ENCODE measurements at regions of chr5 and their contacts with region 1.

Region 1: DNA sequence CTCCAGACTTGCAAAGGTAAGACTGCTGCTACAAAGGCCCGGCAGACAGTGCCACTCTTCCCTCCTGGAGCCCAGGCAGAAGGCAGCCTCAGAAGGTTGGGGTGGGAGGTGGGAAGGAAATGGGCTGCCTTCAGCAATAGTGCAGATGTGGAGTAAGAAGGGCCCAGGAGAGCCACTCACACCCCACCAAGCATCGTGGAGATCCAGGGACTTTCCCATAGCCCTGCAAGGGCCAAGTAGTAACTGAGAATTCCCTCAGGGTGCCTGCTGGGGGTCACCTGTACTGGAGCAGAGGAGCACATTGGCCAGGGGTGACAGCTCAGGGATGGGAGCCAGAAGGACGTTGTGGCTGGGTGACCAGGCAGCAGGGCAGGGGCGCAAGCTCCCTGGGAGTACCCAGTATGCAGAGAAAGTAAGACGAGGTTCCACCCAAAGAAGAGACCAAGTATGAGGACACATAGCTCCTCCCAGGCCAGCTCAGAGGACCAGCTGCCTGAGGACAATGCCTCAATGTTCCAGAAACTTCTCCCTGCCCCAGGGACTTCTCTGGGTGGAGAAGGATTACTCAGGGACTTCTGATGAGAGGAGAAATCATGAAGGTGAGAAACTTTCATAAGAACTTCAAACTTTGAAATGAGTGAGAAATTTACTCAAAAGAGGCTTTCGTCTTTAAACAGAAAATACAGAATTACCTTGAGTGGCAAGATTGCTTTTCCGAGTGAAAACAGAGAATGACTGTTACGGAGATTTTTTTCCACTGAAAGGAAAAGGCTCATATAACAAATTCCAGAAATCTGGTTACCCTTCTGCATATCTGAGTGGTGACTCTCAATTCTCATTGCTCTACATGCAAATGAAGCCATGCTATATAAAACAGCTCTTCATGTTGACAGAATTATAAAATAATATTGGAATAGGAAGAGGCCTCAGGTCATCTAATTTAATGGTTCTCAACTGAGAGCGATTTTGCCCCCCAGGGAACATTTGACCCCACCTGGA is 87.9 kb upstream of the TRIO start:
- DNase-seq: no peak
- H3K4me3 ChIP-seq: peak overlapping the region; percentile 31
- H3K27ac ChIP-seq: peak overlapping the region; percentile 99
- H3K27me3 ChIP-seq: no peaks in the 10 kb centered on the region
- CTCF ChIP-seq: no peak

Region 2: GRCh38 chr5:14016549-14016948 is 38.7 kb before region 1 on chr5:
- CTCF ChIA-PET with region 1: no interaction called
- POLR2A ChIA-PET with region 1: no interaction called
- DNase-seq: no peak
- H3K4me3 ChIP-seq: no peak overlapping the region
- H3K27ac ChIP-seq: no peak overlapping the region
- H3K27me3 ChIP-seq: no peaks in the 10 kb centered on the region
- CTCF ChIP-seq: no peak

Region 3: GRCh38 chr5:14035859-14036440 is 19.3 kb before region 1 on chr5:
- CTCF ChIA-PET with region 1: no interaction called
- POLR2A ChIA-PET with region 1: interaction called, 16 read pairs
- DNase-seq: peak; percentile 99
- H3K4me3 ChIP-seq: no peak overlapping the region
- H3K27ac ChIP-seq: peak overlapping the region; percentile 99
- H3K27me3 ChIP-seq: no peaks in the 10 kb centered on the region
- CTCF ChIP-seq: no peak